ENCODE measurements at regions of chr5 and their contacts with region 1.

Region 1: GRCh38 chr5:145697251-145697990 is 137.7 kb downstream of the PRELID2 start:
- DNase-seq: peak; percentile 40
- ATAC-seq: peak; percentile 89
- H3K4me3 ChIP-seq: no peak overlapping the region
- H3K27ac ChIP-seq: no peak overlapping the region
- H3K4me1 ChIP-seq: peaks cover 0 to 6% of the 10 kb centered on the region in 2 experiments; a peak in 2 of 4 replicates
- H3K27me3 ChIP-seq: no peaks in the 10 kb centered on the region
- CTCF ChIP-seq: peak; percentile 66 to 79 (median 74); a peak in 5 of 6 replicates
- POLR2A ChIP-seq: no peak
- RAD21 ChIP-seq: peak; percentile 75

Region 2: GRCh38 chr5:145587710-145588109 is 109.7 kb before region 1 on chr5:
- CTCF ChIA-PET with region 1: no interaction called
- POLR2A ChIA-PET with region 1: no interaction called
- RAD21 ChIA-PET with region 1: no interaction called
- intact Hi-C with region 1: no loop called
- DNase-seq: peak; percentile 94
- ATAC-seq: peak; percentile 85
- H3K4me3 ChIP-seq: peak overlapping the region in 1 of 2 experiments; percentile 31; a peak in 2 of 4 replicates
- H3K27ac ChIP-seq: peak overlapping the region; percentile 82
- H3K4me1 ChIP-seq: peaks cover 24 to 38% of the 10 kb centered on the region in 2 experiments
- H3K27me3 ChIP-seq: no peaks in the 10 kb centered on the region
- CTCF ChIP-seq: no peak
- POLR2A ChIP-seq: no peak
- RAD21 ChIP-seq: peak; percentile 48

Region 3: GRCh38 chr5:145681686-145682085 is 15.7 kb before region 1 on chr5:
- CTCF ChIA-PET with region 1: interaction called, 13 read pairs
- POLR2A ChIA-PET with region 1: no interaction called
- RAD21 ChIA-PET with region 1: no interaction called
- intact Hi-C with region 1: no loop called
- DNase-seq: peak; percentile 75
- ATAC-seq: peak; percentile 99
- H3K4me3 ChIP-seq: no peak overlapping the region
- H3K27ac ChIP-seq: no peak overlapping the region
- H3K4me1 ChIP-seq: no peaks in the 10 kb centered on the region; a peak in 1 of 4 replicates
- H3K27me3 ChIP-seq: no peaks in the 10 kb centered on the region
- CTCF ChIP-seq: peak; percentile 81 to 93 (median 91)
- POLR2A ChIP-seq: no peak
- RAD21 ChIP-seq: peak; percentile 79

Region 4: DNA sequence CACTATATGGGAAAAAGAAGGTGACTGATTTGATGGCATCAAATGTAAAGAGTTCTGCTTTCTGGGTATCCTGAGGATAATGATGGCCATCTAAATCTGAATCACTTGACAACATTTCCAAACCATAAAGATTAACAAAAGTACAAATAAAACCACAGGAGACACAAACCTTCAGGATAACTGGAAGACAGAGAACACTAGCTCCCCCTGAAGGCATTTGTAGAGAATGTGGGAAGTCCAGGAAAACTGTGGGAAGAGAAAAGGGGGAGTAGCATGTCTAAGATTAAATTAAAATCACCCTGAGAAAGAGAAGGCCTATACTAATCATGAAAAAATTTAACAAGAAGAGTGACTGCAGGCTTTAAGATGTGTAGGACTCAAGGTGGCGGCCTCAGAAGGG is 21.5 kb after region 1 on chr5:
- CTCF ChIA-PET with region 1: interaction called, 11 read pairs
- POLR2A ChIA-PET with region 1: no interaction called
- RAD21 ChIA-PET with region 1: no interaction called
- intact Hi-C with region 1: no loop called
- DNase-seq: peak; percentile 4
- ATAC-seq: peak; percentile 71
- H3K4me3 ChIP-seq: no peak overlapping the region
- H3K27ac ChIP-seq: no peak overlapping the region
- H3K4me1 ChIP-seq: no peaks in the 10 kb centered on the region
- H3K27me3 ChIP-seq: no peaks in the 10 kb centered on the region
- CTCF ChIP-seq: peak; percentile 25 to 65 (median 64); a peak in 5 of 6 replicates
- POLR2A ChIP-seq: no peak
- RAD21 ChIP-seq: peak; percentile 56

Region 5: GRCh38 chr5:145825751-145826180 is 128.3 kb after region 1 on chr5:
- CTCF ChIA-PET with region 1: interaction called, 18 read pairs
- POLR2A ChIA-PET with region 1: no interaction called
- RAD21 ChIA-PET with region 1: interaction called in 1 of 2 experiments, 3 read pairs
- intact Hi-C with region 1: loop called (anchors 2 kb)
- DNase-seq: peak; percentile 39
- ATAC-seq: peak; percentile 78
- H3K4me3 ChIP-seq: no peak overlapping the region
- H3K27ac ChIP-seq: no peak overlapping the region
- H3K4me1 ChIP-seq: peaks cover 7 to 10% of the 10 kb centered on the region in 2 experiments
- H3K27me3 ChIP-seq: no peaks in the 10 kb centered on the region
- CTCF ChIP-seq: peak; percentile 69 to 98 (median 89)
- POLR2A ChIP-seq: no peak
- RAD21 ChIP-seq: peak; percentile 73

Region 6: DNA sequence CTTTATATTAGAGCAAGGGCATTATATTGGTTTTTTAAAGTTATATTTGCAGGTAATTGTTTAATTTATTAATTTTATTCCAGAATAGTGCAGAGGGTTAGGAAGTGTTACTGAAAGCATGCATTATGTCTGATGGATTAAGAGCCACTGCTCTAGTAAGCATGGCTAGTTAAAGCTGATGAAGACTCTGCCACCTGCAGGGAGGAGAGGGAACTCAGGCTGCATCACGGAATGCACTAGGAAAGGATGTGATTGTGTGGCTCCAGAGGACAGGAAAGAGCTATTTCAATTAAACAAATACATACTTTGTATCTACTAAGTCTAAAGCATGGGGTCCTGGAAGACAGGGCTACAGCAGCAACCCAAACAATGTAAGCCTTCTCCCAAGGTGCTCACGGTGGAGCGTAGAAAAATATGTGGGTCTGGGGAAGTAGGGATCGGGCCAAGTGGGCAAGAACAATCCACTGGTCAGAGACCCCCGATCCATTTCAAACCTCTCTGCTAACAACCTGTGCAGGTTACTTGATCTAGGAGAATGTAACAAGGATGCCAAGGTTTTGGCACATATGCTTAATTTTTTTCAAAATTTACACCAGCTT is 190.7 kb after region 1 on chr5:
- CTCF ChIA-PET with region 1: interaction called, 15 read pairs
- POLR2A ChIA-PET with region 1: no interaction called
- RAD21 ChIA-PET with region 1: no interaction called
- intact Hi-C with region 1: loop called (anchors 5 kb)
- DNase-seq: peak; percentile 60
- ATAC-seq: peak; percentile 99
- H3K4me3 ChIP-seq: no peak overlapping the region
- H3K27ac ChIP-seq: no peak overlapping the region
- H3K4me1 ChIP-seq: no peaks in the 10 kb centered on the region
- H3K27me3 ChIP-seq: no peaks in the 10 kb centered on the region
- CTCF ChIP-seq: peak; percentile 78 to 96 (median 80)
- POLR2A ChIP-seq: no peak
- RAD21 ChIP-seq: peak; percentile 86

Region 7: DNA sequence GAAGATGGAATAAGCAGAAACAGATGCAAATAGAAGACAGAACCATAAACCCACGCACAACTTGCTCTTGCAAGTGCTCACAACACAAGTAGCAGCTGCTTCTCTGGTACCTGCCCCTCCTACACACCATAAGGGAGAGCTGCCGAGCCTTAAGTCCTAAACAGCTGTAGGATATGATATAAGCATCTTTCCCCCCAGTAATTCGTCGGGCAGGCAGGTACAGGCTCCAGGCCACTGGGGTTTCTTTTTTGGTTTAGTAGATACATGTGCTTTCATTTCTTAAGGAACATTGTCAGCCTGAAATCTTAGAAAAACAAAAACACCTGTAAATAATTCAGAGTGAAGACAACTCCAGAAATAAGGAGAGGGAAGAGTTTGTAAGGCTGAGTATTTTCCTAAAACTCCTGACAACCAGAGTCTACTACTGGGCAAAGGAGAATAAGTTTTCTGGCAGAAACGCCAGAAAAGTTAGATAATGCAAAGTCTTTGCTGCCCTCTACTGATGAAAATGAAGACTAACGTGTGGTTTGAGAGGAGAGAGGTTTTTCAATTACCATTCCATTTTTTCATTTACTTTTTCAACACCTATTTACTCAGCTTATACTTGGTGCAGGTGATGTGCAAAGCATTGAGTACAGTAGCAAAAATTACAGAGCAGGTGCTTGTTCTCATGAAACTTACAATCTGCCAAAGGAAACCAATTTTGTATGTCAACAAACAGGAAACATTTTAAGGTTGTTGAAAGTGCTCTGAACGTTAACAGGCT is 729.6 kb after region 1 on chr5:
- CTCF ChIA-PET with region 1: no interaction called
- POLR2A ChIA-PET with region 1: no interaction called
- RAD21 ChIA-PET with region 1: no interaction called
- intact Hi-C with region 1: loop called (anchors 5 kb)
- DNase-seq: peak; percentile 26
- ATAC-seq: peak; percentile 81
- H3K4me3 ChIP-seq: no peak overlapping the region
- H3K27ac ChIP-seq: no peak overlapping the region
- H3K4me1 ChIP-seq: no peaks in the 10 kb centered on the region
- H3K27me3 ChIP-seq: no peaks in the 10 kb centered on the region
- CTCF ChIP-seq: peak; percentile 60 to 80 (median 63); a peak in 5 of 6 replicates
- POLR2A ChIP-seq: no peak
- RAD21 ChIP-seq: peak; percentile 89